Activated naive CD4-positive, alpha-beta T cell treated with anti-CD3 and anti-CD28 coated beads for 36 hours (primary cell): ENCODE measurements at regions of chr16 and their contacts with region 1.

Region 1: GRCh38 chr16:53549970-53550690 is 47.1 kb upstream of the AKTIP start:
- DNase-seq: peak; percentile 72
- H3K4me3 Mint-ChIP-seq: no peak overlapping the region
- H3K27ac Mint-ChIP-seq: no peak overlapping the region
- H3K4me1 Mint-ChIP-seq: peaks cover 22% of the 10 kb centered on the region
- H3K27me3 Mint-ChIP-seq: peaks cover 38% of the 10 kb centered on the region

Region 2: GRCh38 chr16:53509906-53510703 is 40.0 kb before region 1 on chr16:
- CTCF ChIA-PET with region 1: interaction called, 5 read pairs
- intact Hi-C with region 1: loop called (anchors 5 kb)
- DNase-seq: peak; percentile 55
- H3K4me3 Mint-ChIP-seq: peak overlapping the region; percentile 10
- H3K27ac Mint-ChIP-seq: no peak overlapping the region
- H3K4me1 Mint-ChIP-seq: peaks cover 18% of the 10 kb centered on the region
- H3K27me3 Mint-ChIP-seq: no peaks in the 10 kb centered on the region

Region 3: GRCh38 chr16:53773150-53773846 is 223.2 kb after region 1 on chr16:
- CTCF ChIA-PET with region 1: no interaction called
- intact Hi-C with region 1: loop called (anchors 5 kb)
- DNase-seq: peak; percentile 40
- H3K4me3 Mint-ChIP-seq: no peak overlapping the region
- H3K27ac Mint-ChIP-seq: no peak overlapping the region
- H3K4me1 Mint-ChIP-seq: peaks cover 31% of the 10 kb centered on the region
- H3K27me3 Mint-ChIP-seq: no peaks in the 10 kb centered on the region

Region 4: DNA sequence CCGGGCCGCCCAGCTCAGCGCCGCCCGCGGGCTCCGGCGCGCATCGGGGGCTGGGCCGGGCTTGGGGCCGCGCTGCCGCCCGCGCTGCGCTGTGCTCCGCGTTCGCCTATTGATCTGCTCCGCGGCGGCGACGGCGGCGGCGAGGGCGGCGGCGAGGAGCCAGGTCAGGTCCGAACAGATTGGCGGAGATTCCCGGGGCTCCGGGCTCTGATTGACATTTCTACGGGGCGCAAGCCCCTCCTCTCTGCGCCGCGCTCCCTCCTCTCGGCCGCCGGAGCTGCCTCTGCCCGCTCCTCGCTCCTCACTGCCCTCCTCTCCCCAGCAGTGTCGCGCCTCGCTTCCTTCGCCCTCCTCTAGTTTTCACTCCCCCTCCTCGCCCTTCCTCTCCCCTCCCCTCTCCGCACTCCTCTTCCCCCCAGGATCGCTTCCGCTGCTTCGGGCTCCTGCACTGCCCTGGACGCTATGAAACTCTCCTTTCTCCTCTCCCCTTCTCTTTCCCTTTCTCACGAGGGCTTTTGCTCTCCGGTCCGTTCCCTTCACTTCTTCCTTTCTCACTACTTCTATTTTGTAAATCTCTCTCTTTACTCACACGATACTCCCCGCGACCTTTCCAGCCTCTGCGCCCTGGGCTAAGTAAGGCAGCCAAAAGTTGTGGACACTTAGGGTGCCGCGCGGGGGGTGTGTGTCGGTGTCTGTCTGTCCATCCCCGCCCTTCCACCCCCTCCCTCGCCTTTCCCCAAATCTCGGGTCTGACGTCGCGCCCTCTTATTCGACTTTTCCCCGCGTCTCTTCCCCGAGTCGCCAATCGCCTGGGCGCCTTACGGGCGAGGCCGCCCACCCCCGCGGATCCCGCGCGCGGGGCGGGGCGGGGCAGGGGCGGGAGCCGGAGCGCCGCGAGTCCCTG is 736.2 kb after region 1 on chr16 and contains the start of gene IRX3:
- CTCF ChIA-PET with region 1: no interaction called
- intact Hi-C with region 1: loop called (anchors 5 kb)
- DNase-seq: peak; percentile 19
- H3K4me3 Mint-ChIP-seq: peak within 1 kb of the TSS; percentile 48
- H3K27ac Mint-ChIP-seq: no peak within 1 kb of the TSS
- H3K4me1 Mint-ChIP-seq: peaks cover 41% of the 10 kb centered on the region
- H3K27me3 Mint-ChIP-seq: peaks cover 69% of the 10 kb centered on the region
- total RNA-seq, gene IRX3: not detected

Region 5: DNA sequence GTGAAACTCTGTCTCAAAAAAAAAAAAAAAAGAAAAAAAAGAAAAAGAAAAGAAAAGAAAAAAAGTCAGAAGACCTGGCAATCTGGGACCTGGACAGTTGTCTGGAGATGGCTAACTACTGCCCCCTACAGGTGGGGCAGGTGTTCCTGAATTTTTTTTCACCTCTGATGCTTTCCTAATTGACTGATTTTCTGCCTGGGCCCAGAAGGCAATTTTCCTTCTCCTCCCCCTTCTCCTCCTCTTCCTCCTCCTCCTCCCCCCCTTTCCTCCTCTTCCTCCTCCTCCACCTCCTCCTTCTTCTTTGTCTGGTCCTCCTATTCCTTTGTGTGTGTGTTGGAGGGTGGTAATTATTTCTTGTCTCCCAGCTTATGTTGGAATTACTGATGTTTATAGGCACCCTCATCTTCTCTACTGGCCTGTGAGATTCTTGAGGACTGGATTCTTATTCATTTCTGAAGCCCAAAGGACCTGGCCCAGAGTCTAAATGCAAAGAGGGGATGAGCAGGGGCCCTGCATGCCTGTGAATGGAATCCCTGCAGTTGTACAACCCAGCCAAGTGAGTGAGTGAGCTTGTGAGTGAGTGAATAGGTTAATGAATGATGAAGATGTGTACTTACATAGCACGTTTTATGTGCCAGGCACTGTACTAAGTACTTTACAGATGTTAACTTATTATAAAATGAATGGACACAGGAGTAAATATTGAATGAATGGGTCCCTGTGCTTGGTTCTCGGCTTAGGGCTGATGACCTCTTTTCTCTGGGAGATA is 1407.5 kb after region 1 on chr16:
- CTCF ChIA-PET with region 1: no interaction called
- intact Hi-C with region 1: loop called (anchors 5 kb)
- DNase-seq: peak; percentile 43
- H3K4me3 Mint-ChIP-seq: no peak overlapping the region
- H3K27ac Mint-ChIP-seq: no peak overlapping the region
- H3K4me1 Mint-ChIP-seq: no peaks in the 10 kb centered on the region
- H3K27me3 Mint-ChIP-seq: peaks cover 14% of the 10 kb centered on the region

Region 6: GRCh38 chr16:55257966-55258613 is 1708.0 kb after region 1 on chr16:
- CTCF ChIA-PET with region 1: interaction called, 3 read pairs
- intact Hi-C with region 1: loop called (anchors 5 kb)
- DNase-seq: peak; percentile 69
- H3K4me3 Mint-ChIP-seq: no peak overlapping the region
- H3K27ac Mint-ChIP-seq: no peak overlapping the region
- H3K4me1 Mint-ChIP-seq: peaks cover 2% of the 10 kb centered on the region
- H3K27me3 Mint-ChIP-seq: peaks cover 11% of the 10 kb centered on the region